Left ventricle myocardium inferior (tissue), 1 donor: ENCODE measurements at regions of chr6 and their contacts with region 1.

Region 1: GRCh38 chr6:37051138-37052026 is 45.9 kb downstream of the FGD2 start:
- DNase-seq: peak; percentile 92
- H3K4me3 ChIP-seq: no peak overlapping the region
- H3K27ac ChIP-seq: no peak overlapping the region
- H3K4me1 ChIP-seq: peaks cover 29% of the 10 kb centered on the region
- H3K27me3 ChIP-seq: no peaks in the 10 kb centered on the region
- CTCF ChIP-seq: peak; percentile 93

Region 2: GRCh38 chr6:37171970-37172812 is 120.8 kb after region 1 on chr6:
- intact Hi-C with region 1: loop called (anchors 2 kb)
- DNase-seq: peak; percentile 84
- H3K4me3 ChIP-seq: peak overlapping the region; percentile 98
- H3K27ac ChIP-seq: peak overlapping the region; percentile 96
- H3K4me1 ChIP-seq: peaks cover 58% of the 10 kb centered on the region
- H3K27me3 ChIP-seq: no peaks in the 10 kb centered on the region
- CTCF ChIP-seq: peak; percentile 94